AG04449 (cell line): ENCODE measurements at regions of chr11 and their contacts with region 1.

Region 1: GRCh38 chr11:119334174-119334930 is at the start of gene RNF26:
- DNase-seq: peak; percentile 88
- H3K4me3 ChIP-seq: peak within 1 kb of the TSS; percentile 97
- CTCF ChIP-seq: no peak

Region 2: DNA sequence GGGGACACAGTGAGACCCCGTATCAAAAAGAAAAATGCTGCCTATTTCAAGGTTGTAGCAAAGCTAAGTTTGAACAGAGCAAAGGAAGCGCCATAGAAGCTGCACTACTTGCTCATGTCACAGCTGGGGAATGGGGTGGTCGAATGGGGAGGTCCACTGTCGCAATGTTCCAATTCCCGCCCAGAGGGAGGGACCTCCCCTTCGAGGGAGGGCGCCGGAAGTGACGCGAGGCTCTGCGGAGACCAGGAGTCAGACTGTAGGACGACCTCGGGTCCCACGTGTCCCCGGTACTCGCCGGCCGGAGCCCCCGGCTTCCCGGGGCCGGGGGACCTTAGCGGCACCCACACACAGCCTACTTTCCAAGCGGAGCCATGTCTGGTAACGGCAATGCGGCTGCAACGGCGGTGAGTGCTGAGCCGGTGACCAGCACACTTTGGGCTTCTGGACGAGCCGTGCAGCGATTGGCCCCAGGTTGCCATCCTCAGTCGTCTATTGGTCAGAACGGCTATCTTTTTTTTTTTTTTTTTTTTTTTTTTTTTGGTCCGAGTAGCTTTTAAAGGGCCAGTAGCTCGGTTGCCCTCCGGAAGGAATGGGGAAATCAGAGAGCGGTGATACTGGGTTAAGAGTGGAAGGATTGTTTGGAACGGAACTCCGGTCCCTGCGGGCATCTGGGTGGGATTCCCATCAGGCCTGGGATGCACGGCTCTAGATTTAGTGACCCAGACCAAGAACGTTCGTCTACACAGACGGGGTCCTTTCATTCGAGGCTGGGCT is 249.5 kb before region 1 on chr11 and contains the start of gene HMBS:
- CTCF ChIA-PET with region 1: interaction called, 10 read pairs
- POLR2A ChIA-PET with region 1: no interaction called
- DNase-seq: no peak
- H3K4me3 ChIP-seq: peak within 1 kb of the TSS; percentile 94
- CTCF ChIP-seq: no peak

Region 3: DNA sequence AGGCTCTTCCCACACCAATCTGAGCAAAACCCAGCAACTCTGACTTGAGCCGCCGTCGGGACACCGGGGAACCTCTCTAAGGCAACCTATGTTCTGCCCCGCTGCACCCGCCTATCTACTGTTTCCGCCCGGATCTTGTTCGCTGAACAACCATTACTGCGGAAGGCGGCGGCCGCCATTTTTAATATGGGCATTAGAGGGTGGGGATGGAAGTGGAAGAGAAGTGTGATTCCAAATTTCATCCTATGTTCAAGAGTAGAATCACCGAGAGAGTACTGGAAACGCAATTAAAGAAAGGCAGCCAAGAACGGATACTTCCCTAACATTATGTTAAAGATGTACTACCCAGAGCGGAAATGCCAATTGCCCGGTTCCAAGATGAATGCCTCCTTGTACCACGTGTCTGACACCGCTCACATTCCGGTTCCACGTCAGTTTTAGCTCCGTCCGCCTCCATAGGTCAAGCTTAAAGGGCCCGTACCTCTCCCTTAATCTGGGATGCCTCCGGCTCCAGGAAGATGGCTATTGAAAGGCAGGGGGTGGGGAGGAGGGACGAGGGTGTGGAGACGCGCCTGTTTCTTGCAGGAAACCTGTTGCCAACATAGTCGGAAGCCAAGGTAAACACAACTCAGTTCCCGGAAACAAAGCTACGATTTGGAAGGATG is 232.5 kb before region 1 on chr11 and contains the start of gene DPAGT1:
- CTCF ChIA-PET with region 1: interaction called, 21 read pairs
- POLR2A ChIA-PET with region 1: interaction called, 3 read pairs
- DNase-seq: peak; percentile 82
- H3K4me3 ChIP-seq: peak within 1 kb of the TSS; percentile 88
- CTCF ChIP-seq: no peak

Region 4: DNA sequence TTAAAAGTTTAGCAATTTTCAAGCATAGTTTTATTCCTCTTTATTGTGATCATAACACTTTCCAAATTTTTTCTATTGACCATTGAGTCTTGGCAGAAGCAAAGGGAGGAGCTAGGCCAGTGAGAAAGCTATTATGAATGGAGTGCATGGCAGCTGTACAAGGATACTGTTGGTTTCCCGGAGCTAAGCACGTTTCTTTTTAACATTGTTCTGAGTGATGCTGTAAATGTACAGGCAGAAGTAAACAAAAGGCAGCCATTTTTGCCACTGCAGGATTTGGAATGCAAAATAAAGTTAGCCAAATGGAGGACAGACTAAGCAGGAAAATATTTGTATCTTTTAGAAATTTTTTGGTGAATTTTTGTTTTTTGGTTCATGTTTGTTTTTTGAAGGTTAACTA is 112.0 kb before region 1 on chr11:
- CTCF ChIA-PET with region 1: no interaction called
- POLR2A ChIA-PET with region 1: no interaction called
- DNase-seq: no peak
- H3K4me3 ChIP-seq: no peak overlapping the region
- CTCF ChIP-seq: no peak

Region 5: GRCh38 chr11:119363851-119364590 is 29.7 kb after region 1 on chr11:
- CTCF ChIA-PET with region 1: interaction called, 358 read pairs
- POLR2A ChIA-PET with region 1: interaction called, 5 read pairs
- DNase-seq: no peak
- H3K4me3 ChIP-seq: peak overlapping the region; percentile 50
- CTCF ChIP-seq: no peak

Region 6: DNA sequence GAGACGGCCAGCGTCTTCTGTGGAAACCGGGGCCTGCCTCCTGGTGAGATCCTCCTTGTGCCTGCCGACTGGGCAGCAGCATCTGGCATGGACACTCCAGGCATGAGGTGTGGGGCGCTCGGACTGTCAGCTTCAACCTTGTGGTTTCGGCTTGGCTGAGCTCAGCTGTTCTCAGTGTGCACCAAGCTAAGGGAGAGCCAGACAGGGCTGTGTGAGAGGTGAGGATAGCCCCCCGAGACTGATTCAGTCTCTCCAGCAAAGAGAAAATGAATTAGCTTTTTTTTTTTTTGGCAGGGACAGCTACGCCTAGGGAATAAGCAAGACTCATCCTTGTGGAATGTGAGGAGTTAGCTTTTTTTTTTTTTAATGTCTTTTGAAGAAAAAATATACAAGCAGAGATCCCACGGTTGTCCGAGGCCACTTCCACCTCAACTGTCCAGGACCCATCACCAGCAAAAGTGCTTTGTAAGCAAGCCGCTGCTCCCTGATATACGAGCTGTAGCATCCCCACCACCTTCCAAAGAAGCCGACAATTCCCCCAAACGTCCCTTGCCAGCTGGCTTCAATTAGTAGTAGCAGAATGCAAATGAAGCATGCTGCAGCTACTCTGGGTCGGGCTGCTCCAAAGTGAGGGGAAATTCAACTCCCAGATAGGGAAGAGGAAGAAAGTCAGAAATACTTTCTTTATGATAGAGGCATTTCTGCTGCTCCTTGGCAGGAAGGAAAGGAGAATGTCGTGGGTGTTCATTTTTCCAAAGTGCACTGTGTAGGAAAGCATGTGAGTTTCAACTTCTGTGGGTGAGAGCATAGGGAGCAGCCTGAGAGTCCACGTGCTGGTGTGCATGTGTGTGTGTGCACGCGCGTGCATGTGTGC is 98.4 kb after region 1 on chr11:
- CTCF ChIA-PET with region 1: interaction called, 17 read pairs
- POLR2A ChIA-PET with region 1: no interaction called
- DNase-seq: no peak
- H3K4me3 ChIP-seq: peak overlapping the region; percentile 48
- CTCF ChIP-seq: no peak